ENCODE measurements at regions of chr13 and their contacts with region 1.

Region 1: GRCh38 chr13:103859952-103860351 is 793.7 kb upstream of the SLC10A2 start:
- DNase-seq: no peak
- H3K4me3 Mint-ChIP-seq: no peak overlapping the region
- H3K27ac Mint-ChIP-seq: no peak overlapping the region
- H3K4me1 Mint-ChIP-seq: no peaks in the 10 kb centered on the region
- H3K27me3 Mint-ChIP-seq: no peaks in the 10 kb centered on the region
- CTCF ChIP-seq: no peak

Region 2: GRCh38 chr13:104522235-104523072 is 662.5 kb after region 1 on chr13:
- CTCF ChIA-PET with region 1: no interaction called
- POLR2A ChIA-PET with region 1: no interaction called
- intact Hi-C with region 1: loop called (anchors 10 kb)
- DNase-seq: no peak
- H3K4me3 Mint-ChIP-seq: no peak overlapping the region
- H3K27ac Mint-ChIP-seq: no peak overlapping the region
- H3K4me1 Mint-ChIP-seq: no peaks in the 10 kb centered on the region
- H3K27me3 Mint-ChIP-seq: no peaks in the 10 kb centered on the region
- CTCF ChIP-seq: no peak

Region 3: GRCh38 chr13:104625201-104625600 is 765.2 kb after region 1 on chr13:
- CTCF ChIA-PET with region 1: no interaction called
- POLR2A ChIA-PET with region 1: no interaction called
- intact Hi-C with region 1: no loop called
- DNase-seq: no peak
- H3K4me3 Mint-ChIP-seq: no peak overlapping the region
- H3K27ac Mint-ChIP-seq: no peak overlapping the region
- H3K4me1 Mint-ChIP-seq: no peaks in the 10 kb centered on the region
- H3K27me3 Mint-ChIP-seq: no peaks in the 10 kb centered on the region
- CTCF ChIP-seq: no peak

Measured in MCF 10A (cell line).